ENCODE measurements at regions of chr1 and their contacts with region 1.

Region 1: DNA sequence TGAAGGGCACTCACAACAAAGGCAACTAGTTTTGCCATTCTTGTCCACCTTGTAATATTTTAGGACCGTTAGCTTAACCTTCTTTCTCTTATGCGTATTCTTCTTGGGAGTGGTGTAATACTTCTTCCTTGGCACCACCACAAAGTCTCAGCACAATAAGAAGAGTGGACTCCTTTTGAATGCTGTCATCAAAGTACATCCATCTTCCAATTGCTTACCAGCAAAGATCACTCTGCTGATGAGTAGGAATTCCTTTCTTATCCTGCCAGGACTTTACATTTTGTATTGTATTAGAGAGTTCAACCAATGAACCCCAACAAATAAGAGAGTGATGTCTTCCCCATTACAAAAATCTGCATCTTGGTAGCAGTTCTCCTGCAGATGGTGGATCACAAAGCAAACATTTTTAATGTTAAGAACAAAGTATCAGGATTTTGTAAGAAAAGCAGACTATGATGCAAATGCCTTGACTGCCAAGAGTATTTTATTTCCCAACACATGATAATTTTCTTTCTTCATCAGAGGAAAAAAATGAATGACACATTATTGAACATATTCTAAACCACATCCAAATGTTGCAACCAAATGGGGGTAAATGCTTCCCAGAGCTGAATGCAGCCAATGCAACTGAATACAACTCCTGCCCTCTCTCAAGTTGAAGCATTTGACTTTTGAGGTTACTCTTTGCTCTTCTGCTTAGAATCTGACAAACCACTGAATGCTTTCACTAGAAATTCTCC is 5.1 kb upstream of the ARNT start:
- DNase-seq: peak in 1 of 2 experiments; percentile 76
- H3K4me3 ChIP-seq: no peak overlapping the region
- H3K27ac ChIP-seq: peak overlapping the region; percentile 19; the same call in 1 of the 2 replicates
- H3K4me1 ChIP-seq: peaks cover 18% of the 10 kb centered on the region
- H3K27me3 ChIP-seq: no peaks in the 10 kb centered on the region
- CTCF ChIP-seq: no peak

Region 2: GRCh38 chr1:150486964-150487762 is 394.3 kb before region 1 on chr1 and contains the start of gene TARS2:
- CTCF ChIA-PET with region 1: no interaction called
- POLR2A ChIA-PET with region 1: interaction called, 36 read pairs
- intact Hi-C with region 1: no loop called
- DNase-seq: peak; percentile 95 to 97
- H3K4me3 ChIP-seq: peak within 1 kb of the TSS; percentile 81
- H3K27ac ChIP-seq: peak within 1 kb of the TSS; percentile 18; the same call in 1 of the 2 replicates
- H3K4me1 ChIP-seq: peaks cover 8% of the 10 kb centered on the region; the same call in 1 of the 2 replicates
- H3K27me3 ChIP-seq: no peaks in the 10 kb centered on the region
- CTCF ChIP-seq: peak; percentile 61
- total RNA-seq, gene TARS2: 44.8 and 46.0 TPM in 2 replicates

Measured in PC-9 (cell line).